ENCODE measurements at regions of chr14 and their contacts with region 1.

Region 1: GRCh38 chr14:73221945-73222344 is 15.4 kb upstream of the PAPLN start:
- DNase-seq: no peak
- H3K4me3 Mint-ChIP-seq: no peak overlapping the region
- H3K27ac Mint-ChIP-seq: peak overlapping the region; percentile 50
- H3K4me1 Mint-ChIP-seq: peaks cover 23% of the 10 kb centered on the region
- H3K27me3 Mint-ChIP-seq: no peaks in the 10 kb centered on the region

Region 2: GRCh38 chr14:73167727-73168126 is 54.2 kb before region 1 on chr14:
- intact Hi-C with region 1: loop called (anchors 2 kb)
- DNase-seq: no peak
- H3K4me3 Mint-ChIP-seq: no peak overlapping the region
- H3K27ac Mint-ChIP-seq: no peak overlapping the region
- H3K4me1 Mint-ChIP-seq: no peaks in the 10 kb centered on the region
- H3K27me3 Mint-ChIP-seq: no peaks in the 10 kb centered on the region

Region 3: GRCh38 chr14:74945823-74946682 is 1724.1 kb after region 1 on chr14:
- intact Hi-C with region 1: no loop called
- DNase-seq: peak; percentile 94
- H3K4me3 Mint-ChIP-seq: no peak overlapping the region
- H3K27ac Mint-ChIP-seq: no peak overlapping the region
- H3K4me1 Mint-ChIP-seq: peaks cover 21% of the 10 kb centered on the region
- H3K27me3 Mint-ChIP-seq: peaks cover 2% of the 10 kb centered on the region